ENCODE measurements at regions of chr1 and their contacts with region 1.

Region 1: DNA sequence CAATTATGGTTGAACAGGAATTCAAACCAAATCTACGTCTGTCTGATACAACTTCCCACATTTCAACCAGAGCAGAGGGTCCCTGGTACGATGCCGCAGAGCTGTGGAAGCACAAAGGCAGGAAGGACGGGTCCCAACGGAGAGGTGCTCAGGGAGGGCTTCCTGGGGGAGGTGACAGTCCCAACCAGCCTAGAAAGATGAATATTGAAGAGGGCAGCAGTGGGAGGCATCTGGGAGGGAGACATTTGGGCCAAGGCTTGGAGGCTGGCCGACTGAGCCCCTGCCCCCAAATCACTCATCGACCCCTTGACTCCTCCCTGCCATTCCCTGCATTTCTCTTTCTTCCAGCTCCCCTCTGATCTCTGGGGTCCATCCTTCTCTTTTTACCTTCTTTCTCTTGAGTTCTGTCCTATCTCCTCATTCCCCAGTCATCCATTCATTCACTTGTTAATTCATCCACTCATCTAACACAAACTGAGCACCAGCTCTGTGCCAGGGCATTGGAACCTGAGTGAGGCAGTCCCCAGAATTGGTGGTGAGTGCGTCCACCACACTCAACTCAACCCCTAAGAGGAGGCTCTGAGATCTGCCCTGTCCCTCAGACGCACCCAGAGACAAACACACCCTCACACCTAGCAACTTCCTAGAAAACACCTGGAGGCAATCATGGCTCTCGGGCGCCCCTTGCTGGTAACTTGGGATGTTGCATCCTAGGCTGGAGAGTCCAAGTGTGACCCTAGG is 13.2 kb upstream of the CELA3B start:
- DNase-seq: peak; percentile 73 to 99
- H3K4me3 ChIP-seq: peak overlapping the region in 1 of 4 experiments; percentile 15; a peak in 1 of 8 replicates
- H3K27ac ChIP-seq: no peak overlapping the region
- H3K4me1 ChIP-seq: peaks cover 0 to 6% (median 4%) of the 10 kb centered on the region in 4 experiments; a peak in 6 of 7 replicates
- H3K27me3 ChIP-seq: no peaks in the 10 kb centered on the region
- CTCF ChIP-seq: peak; percentile 84 to 95 (median 92)
- EP300 ChIP-seq: no peak
- POLR2A ChIP-seq: no peak
- RAD21 ChIP-seq: peak; percentile 99 to 100

Region 2: GRCh38 chr1:21886486-21887199 is 77.0 kb before region 1 on chr1:
- CTCF ChIA-PET with region 1: interaction called, 22 read pairs
- POLR2A ChIA-PET with region 1: no interaction called
- DNase-seq: no peak
- H3K4me3 ChIP-seq: no peak overlapping the region
- H3K27ac ChIP-seq: no peak overlapping the region
- H3K4me1 ChIP-seq: no peaks in the 10 kb centered on the region
- H3K27me3 ChIP-seq: no peaks in the 10 kb centered on the region
- CTCF ChIP-seq: no peak
- EP300 ChIP-seq: no peak
- POLR2A ChIP-seq: no peak
- RAD21 ChIP-seq: no peak

Region 3: DNA sequence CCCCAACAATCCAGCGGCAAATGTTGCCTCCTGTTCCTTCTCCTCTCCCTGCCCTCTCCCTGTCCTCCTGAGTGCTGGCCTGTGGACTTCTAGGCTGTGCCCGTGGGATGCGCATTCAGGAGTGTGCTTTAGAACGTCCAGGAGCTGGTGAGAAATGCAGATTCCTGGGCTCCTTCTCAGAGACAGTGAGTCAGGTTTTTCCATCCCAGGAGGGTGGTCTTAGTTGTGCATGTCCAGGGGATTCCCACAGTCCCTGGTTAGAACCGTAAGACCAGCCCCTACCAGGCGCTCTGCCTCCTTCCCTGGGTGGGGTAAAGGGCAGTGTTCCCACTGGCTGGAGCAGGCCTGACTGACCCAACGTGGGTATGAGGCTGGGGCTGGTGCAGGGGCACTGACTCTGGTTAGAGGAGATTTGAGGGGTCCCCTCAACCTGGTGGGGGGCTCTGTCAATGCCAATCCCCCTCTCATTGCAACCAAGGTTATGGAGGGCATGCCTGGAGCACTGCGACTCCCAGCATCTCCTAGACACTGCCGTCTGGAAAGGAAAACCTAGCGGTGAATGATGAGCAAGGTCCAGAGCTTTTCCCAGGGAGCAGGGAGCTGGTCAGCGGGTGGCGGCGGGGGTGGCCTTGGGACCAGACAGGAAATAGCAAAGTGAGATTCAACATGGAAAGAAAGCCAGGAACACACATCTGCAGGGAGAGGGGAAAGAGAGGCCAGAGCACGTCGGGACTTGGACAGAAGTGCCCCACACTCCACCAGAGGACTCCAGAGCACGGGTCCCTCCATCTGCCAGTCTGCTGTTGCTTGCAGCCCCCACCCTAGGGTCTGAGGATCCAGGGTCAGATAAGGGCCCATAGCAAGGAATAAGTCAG is 65.1 kb before region 1 on chr1:
- CTCF ChIA-PET with region 1: interaction called, 12 read pairs
- POLR2A ChIA-PET with region 1: interaction called, 5 read pairs
- DNase-seq: no peak
- H3K4me3 ChIP-seq: no peak overlapping the region
- H3K27ac ChIP-seq: no peak overlapping the region
- H3K4me1 ChIP-seq: peaks cover 0 to 14% (median 7%) of the 10 kb centered on the region in 4 experiments; a peak in 3 of 7 replicates
- H3K27me3 ChIP-seq: no peaks in the 10 kb centered on the region
- CTCF ChIP-seq: no peak
- EP300 ChIP-seq: no peak
- POLR2A ChIP-seq: no peak
- RAD21 ChIP-seq: no peak

Region 4: GRCh38 chr1:21919520-21919919 is 44.1 kb before region 1 on chr1:
- CTCF ChIA-PET with region 1: interaction called, 11 read pairs
- POLR2A ChIA-PET with region 1: interaction called, 3 read pairs
- DNase-seq: no peak
- H3K4me3 ChIP-seq: no peak overlapping the region
- H3K27ac ChIP-seq: no peak overlapping the region
- H3K4me1 ChIP-seq: peaks cover 12 to 28% (median 22%) of the 10 kb centered on the region in 4 experiments
- H3K27me3 ChIP-seq: no peaks in the 10 kb centered on the region
- CTCF ChIP-seq: no peak
- EP300 ChIP-seq: no peak
- POLR2A ChIP-seq: no peak
- RAD21 ChIP-seq: no peak

Region 5: DNA sequence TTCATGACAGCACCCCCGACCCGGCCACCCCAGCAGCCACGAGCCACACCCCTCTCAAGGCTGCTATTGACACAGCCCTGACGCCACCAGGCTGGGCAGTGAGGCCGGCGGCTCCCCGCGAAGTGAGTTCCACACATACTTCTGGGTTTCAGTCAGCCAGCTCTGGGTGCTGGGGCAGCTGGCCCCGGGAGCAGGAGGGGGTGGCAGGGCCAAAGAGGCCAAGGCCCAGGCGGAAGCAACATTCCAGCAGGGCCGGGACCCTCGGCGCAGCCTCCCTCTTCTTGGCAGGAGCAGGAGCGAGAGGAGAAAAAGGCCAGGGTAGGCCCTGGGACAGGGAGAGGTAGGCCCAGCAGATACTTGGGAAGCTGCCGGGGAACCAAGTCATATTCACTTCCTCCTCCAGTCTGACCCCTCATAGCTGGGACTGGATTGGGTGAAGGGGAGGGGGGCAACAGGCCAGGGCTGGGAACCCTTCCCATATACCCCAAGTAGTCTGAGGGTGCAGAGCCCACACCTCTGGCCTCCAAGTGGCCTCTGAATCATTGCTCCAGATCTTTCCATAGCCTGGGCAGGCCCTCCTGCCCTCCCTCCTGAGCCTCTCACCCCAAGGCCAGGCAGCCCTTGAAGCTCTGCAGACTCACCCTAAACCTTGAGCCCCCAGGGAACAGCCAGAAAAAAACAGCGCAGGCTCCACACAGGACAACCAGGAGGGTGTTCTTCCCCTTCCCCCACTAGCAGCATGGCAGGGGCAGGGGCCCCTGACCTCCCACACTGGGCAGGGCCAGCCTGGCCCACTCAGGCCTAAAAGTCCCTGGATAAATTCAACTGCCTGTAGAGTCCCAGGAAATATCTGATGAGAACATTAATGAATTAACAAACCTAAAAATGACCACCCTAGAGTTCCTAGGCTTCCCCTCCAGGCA is 32.2 kb before region 1 on chr1:
- CTCF ChIA-PET with region 1: interaction called, 11 read pairs
- POLR2A ChIA-PET with region 1: no interaction called
- DNase-seq: no peak
- H3K4me3 ChIP-seq: no peak overlapping the region
- H3K27ac ChIP-seq: no peak overlapping the region; the same call in 1 of the 2 replicates
- H3K4me1 ChIP-seq: peaks cover 8 to 45% (median 25%) of the 10 kb centered on the region in 4 experiments
- H3K27me3 ChIP-seq: no peaks in the 10 kb centered on the region
- CTCF ChIP-seq: no peak
- EP300 ChIP-seq: no peak
- POLR2A ChIP-seq: no peak
- RAD21 ChIP-seq: no peak

Region 6: DNA sequence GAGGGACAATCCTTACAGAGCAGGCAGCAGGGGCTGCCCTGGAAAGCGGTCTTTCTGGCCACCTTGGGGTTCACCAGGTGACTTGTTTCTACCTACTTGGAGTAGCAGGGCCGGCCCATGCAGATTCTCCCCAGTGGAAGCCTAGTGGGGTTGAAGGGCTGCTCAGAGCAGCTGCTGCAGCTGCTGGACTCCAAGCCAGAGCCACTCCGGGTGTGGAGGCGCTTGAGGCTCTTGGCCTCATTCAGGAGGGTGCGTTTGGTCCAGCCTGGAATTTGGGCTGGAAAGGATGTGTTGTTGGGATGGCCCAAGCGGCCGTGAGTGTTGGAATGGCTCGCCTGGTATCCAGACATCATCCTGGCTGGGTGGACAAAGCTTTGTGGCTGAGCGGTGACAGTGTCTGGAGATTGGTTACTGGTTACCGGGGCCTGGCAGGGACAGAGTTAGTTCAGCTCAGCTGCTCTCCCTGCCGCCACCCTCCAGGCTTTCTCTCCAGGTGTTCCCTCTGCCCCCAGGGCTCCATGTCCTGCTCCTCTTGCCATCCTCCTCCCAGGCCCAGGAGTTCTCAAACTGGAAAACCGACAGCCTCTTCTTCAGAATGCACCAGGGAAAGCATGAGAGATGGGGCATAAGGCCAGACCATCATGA is 12.3 kb before region 1 on chr1:
- CTCF ChIA-PET with region 1: interaction called, 14 read pairs
- POLR2A ChIA-PET with region 1: interaction called, 3 read pairs
- DNase-seq: no peak
- H3K4me3 ChIP-seq: no peak overlapping the region
- H3K27ac ChIP-seq: no peak overlapping the region
- H3K4me1 ChIP-seq: peaks cover 5 to 13% (median 8%) of the 10 kb centered on the region in 4 experiments
- H3K27me3 ChIP-seq: 0 out of 7 replicates have a peak, but pooled peaks cover 0 to 2% (median 0%) of the 10 kb centered on the region in 4 experiments
- CTCF ChIP-seq: no peak
- EP300 ChIP-seq: no peak
- POLR2A ChIP-seq: no peak
- RAD21 ChIP-seq: no peak

Region 7: GRCh38 chr1:22039594-22040285 is 76.1 kb after region 1 on chr1:
- CTCF ChIA-PET with region 1: no interaction called
- POLR2A ChIA-PET with region 1: no interaction called
- DNase-seq: no peak
- H3K4me3 ChIP-seq: no peak overlapping the region
- H3K27ac ChIP-seq: no peak overlapping the region
- H3K4me1 ChIP-seq: peaks cover 4 to 15% (median 8%) of the 10 kb centered on the region in 4 experiments; a peak in 6 of 7 replicates
- H3K27me3 ChIP-seq: no peaks in the 10 kb centered on the region
- CTCF ChIP-seq: no peak
- EP300 ChIP-seq: no peak
- POLR2A ChIP-seq: no peak
- RAD21 ChIP-seq: no peak

Measured in H1 (cell line).